Lower leg skin (tissue), 4 donors: ENCODE measurements at regions of chr10 and their contacts with region 1.

Region 1: GRCh38 chr10:112456533-112456932 is 9.5 kb downstream of the VTI1A start:
- DNase-seq: no peak
- H3K4me3 ChIP-seq: no peak overlapping the region
- CTCF ChIP-seq: no peak
- POLR2A ChIP-seq: no peak

Region 2: GRCh38 chr10:111151595-111152307 is 1304.8 kb before region 1 on chr10:
- intact Hi-C with region 1: loop called (anchors 5 kb)
- DNase-seq: no peak
- H3K4me3 ChIP-seq: no peak overlapping the region
- CTCF ChIP-seq: no peak
- POLR2A ChIP-seq: no peak